Naive thymus-derived CD4-positive, alpha-beta T cell (primary cell): ENCODE measurements at regions of chr14 and their contacts with region 1.

Region 1: DNA sequence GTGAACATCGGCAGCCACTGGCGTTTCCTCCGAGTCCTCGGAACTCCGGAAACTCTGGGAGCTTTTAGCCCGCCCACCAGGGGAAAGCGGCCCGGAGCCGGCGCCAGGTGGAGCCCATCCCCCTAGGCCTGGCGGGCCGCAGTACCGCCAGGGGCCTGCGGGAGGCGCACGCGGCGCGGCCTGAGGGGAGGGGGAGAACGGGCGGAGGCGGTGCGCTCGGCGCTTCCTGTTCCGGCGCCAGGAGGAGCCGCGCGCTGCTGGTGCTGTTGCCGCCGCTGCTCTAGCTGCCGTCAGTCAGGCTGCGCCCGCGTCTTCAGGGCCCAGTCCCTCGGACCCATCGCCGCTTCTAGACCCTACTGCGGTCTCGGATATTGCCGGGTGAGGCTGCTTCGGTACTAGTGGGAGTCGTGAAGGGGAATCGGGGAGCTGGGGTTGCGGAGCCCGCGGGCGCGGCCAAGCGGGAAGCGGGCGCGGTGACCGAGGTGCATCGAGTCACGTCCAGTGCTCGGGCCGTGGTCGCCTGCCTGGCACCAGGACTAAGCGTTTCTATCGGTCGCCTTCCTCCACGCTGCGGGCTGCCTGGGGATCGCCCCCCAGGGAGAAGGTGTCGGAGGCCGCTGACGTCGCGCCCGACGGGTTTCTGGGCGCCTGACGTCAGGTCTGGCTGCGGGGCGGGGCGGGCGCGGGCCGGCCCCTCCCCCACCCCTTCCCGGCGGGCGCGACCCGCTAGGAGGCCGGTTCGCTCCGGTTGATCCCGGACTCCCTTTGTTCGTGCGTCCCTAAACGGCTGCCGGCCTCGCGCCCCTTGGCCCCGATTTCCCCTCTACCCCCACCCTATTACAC is at the start of gene MAPK1IP1L:
- DNase-seq: peak; percentile 86 to 99 (median 92)
- ATAC-seq: peak; percentile 97
- H3K4me3 ChIP-seq: peak within 1 kb of the TSS; percentile 93
- H3K4me3 Mint-ChIP-seq: peak within 1 kb of the TSS; percentile 88 to 94 (median 92)
- H3K27ac ChIP-seq: peak within 1 kb of the TSS; percentile 100
- H3K27ac Mint-ChIP-seq: peak within 1 kb of the TSS; percentile 87 to 97 (median 96)
- H3K4me1 ChIP-seq: peaks cover 26 to 32% of the 10 kb centered on the region in 2 donors
- H3K4me1 Mint-ChIP-seq: peaks cover 17 to 54% (median 39%) of the 10 kb centered on the region in 7 donors
- H3K27me3 ChIP-seq: no peaks in the 10 kb centered on the region
- H3K27me3 Mint-ChIP-seq: no peaks in the 10 kb centered on the region
- total RNA-seq, gene MAPK1IP1L: 65.1 to 143 (median 111) TPM

Region 2: GRCh38 chr14:54396493-54397335 is 654.9 kb before region 1 on chr14 and contains the start of gene CDKN3:
- CTCF ChIA-PET with region 1: no interaction called
- POLR2A ChIA-PET with region 1: no interaction called
- intact Hi-C with region 1: loop called in 1 of 2 experiments (anchors 5 kb)
- DNase-seq: peak; percentile 91 to 96 (median 95)
- ATAC-seq: peak; percentile 98
- H3K4me3 ChIP-seq: peak within 1 kb of the TSS; percentile 85
- H3K4me3 Mint-ChIP-seq: peak within 1 kb of the TSS; percentile 81 to 96 (median 90)
- H3K27ac ChIP-seq: peak within 1 kb of the TSS; percentile 46
- H3K27ac Mint-ChIP-seq: peak within 1 kb of the TSS; percentile 24 to 93 (median 83)
- H3K4me1 ChIP-seq: peaks cover 0 to 9% of the 10 kb centered on the region in 2 donors
- H3K4me1 Mint-ChIP-seq: peaks cover 0 to 38% (median 12%) of the 10 kb centered on the region in 7 donors
- H3K27me3 ChIP-seq: no peaks in the 10 kb centered on the region
- H3K27me3 Mint-ChIP-seq: peaks cover 0 to 2% (median 0%) of the 10 kb centered on the region in 5 donors
- total RNA-seq, gene CDKN3: 0.93 to 48.1 (median 3.0) TPM

Region 3: DNA sequence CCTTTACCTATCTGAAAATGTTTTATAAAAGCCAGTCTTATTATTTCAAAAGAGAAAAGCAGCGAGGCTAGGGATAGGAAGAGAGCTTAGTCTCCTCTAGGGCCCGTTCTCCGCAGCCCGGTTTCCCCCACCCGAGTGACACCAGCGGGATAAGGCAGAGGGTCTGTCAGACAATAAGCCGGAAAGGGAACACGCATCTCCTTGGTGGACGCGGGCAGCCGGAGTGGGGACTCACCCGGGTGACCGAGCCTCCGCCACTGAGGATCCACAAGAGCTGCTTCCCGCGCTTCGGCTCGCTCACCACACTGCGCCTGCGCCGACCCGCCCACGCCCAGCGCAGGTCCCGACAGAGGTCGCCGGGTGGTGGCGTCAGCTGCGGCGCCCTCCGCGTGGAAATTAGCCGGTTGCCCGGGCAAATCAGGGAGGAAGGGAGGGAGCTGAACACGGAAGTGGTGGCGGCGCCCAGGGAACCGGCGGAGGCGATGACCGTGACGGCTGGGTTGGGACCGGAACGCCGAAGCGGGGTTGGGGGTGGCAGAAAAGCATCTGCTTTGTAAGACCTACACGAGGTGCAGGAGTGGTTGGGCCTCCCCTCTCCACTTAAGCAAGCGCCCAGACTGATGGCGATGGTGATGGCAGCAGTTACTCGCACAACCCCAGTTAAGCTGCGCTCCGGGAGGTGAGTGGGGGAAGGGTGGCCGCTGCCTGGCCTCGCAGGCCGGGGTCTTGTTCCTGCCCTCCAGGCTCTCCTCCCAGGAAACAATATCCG is 24.7 kb before region 1 on chr14 and contains the starts of genes SOCS4 and WDHD1:
- CTCF ChIA-PET with region 1: interaction called, 13 read pairs
- POLR2A ChIA-PET with region 1: interaction called, 37 read pairs
- intact Hi-C with region 1: loop called (anchors 1 kb)
- DNase-seq: peak; percentile 93 to 100 (median 96)
- ATAC-seq: peak; percentile 97
- H3K4me3 ChIP-seq: peak within 1 kb of the TSS; percentile 87
- H3K4me3 Mint-ChIP-seq: peak within 1 kb of the TSS; percentile 84 to 96 (median 93)
- H3K27ac ChIP-seq: peak within 1 kb of the TSS; percentile 86
- H3K27ac Mint-ChIP-seq: peak within 1 kb of the TSS; percentile 68 to 96 (median 92)
- H3K4me1 ChIP-seq: peaks cover 12 to 31% of the 10 kb centered on the region in 2 donors
- H3K4me1 Mint-ChIP-seq: peaks cover 26 to 59% (median 53%) of the 10 kb centered on the region in 7 donors
- H3K27me3 ChIP-seq: no peaks in the 10 kb centered on the region
- H3K27me3 Mint-ChIP-seq: no peaks in the 10 kb centered on the region
- total RNA-seq, gene SOCS4: 21.2 to 30.3 (median 22.1) TPM
- total RNA-seq, gene WDHD1: 2.6 to 26.6 (median 3.6) TPM

Region 4: DNA sequence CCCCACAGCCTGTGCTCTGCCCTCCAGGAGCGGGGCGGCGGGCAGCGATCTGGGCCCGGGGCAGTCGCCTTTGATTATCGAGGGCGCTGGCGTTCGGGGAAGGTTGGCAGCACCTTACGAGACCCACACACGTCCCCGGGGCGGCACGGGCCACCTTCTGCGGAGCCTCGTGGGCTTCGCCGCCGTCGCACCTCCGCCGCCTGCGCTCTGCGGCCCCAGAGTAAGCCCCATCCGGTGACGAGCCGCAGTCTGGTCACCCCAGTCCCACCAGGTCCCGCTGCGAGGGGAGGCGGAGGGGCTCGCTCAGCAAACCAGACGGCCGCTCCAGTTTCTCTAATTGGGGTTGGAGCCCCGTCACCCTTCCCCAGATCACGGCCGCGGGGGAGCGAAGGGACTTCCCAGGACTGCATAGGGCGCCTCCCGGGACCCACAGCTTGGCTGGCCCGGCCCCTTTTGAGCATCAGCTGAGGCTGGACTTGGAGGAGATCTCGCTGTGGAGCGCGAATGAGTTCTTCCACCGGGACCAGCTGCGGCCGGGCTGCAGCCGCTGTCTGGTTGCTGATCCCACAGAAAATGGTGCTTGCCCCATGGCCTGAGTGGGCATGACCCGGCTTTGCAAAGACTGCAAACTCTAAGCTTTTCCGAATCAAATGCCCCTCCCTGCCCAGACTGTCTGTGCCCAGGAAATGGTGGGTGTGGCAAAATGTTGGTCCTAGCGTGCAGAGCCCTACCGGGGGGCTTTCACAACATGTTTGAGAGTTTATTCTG is 78.0 kb after region 1 on chr14:
- CTCF ChIA-PET with region 1: no interaction called
- POLR2A ChIA-PET with region 1: interaction called, 3 read pairs
- intact Hi-C with region 1: loop called in 1 of 2 experiments (anchors 2 kb)
- DNase-seq: peak in 8 of 9 donors; percentile 5 to 59 (median 16)
- ATAC-seq: peak; percentile 64
- H3K4me3 ChIP-seq: peak overlapping the region; percentile 19
- H3K4me3 Mint-ChIP-seq: peak overlapping the region; percentile 4 to 85 (median 64)
- H3K27ac ChIP-seq: no peak overlapping the region
- H3K27ac Mint-ChIP-seq: peak overlapping the region in 1 of 9 donors; percentile 60
- H3K4me1 ChIP-seq: peaks cover 0 to 13% of the 10 kb centered on the region in 2 donors
- H3K4me1 Mint-ChIP-seq: peaks cover 0 to 45% (median 8%) of the 10 kb centered on the region in 7 donors
- H3K27me3 ChIP-seq: no peaks in the 10 kb centered on the region
- H3K27me3 Mint-ChIP-seq: peaks cover 17 to 60% (median 41%) of the 10 kb centered on the region in 5 donors

Region 5: DNA sequence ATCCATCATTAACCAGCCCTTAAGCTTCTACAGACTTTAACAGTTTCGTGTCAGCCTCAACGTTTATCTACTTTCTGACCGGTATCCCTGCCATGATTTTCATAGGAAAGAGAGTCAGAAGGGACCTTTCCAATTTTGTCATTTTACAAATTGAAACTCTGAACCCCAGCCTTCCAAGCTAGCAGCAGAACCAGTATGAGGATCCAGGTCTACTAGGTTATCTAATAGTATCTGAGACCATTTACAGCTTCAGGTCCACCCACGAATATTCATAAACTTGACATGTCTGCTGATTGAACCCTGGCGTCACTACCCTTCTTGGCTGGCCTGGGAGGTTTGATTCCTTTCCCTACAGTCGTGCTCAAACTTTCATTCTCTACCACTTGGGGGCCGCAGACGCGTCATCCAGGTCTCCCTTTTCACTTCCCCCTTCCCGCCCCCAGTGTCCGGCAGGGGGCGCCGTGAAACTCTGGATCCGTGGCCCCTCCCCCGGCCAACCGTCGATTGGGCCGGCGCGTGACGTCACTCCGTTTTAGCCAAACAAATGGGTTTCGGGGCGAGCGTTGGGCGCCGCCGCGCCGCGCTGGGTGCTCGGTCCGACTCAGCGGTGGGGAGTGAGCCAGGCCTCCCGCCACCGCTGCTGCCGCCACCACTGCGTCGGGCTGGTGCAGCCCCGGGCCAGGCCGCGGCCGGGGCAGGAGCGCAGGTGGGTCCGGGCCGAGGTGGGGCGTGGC is 219.4 kb after region 1 on chr14 and contains the start of gene FBXO34:
- CTCF ChIA-PET with region 1: interaction called, 4 read pairs
- POLR2A ChIA-PET with region 1: no interaction called
- intact Hi-C with region 1: loop called in 1 of 2 experiments (anchors 1 kb)
- DNase-seq: peak; percentile 96 to 100 (median 99)
- ATAC-seq: peak; percentile 96
- H3K4me3 ChIP-seq: peak within 1 kb of the TSS; percentile 64
- H3K4me3 Mint-ChIP-seq: peak within 1 kb of the TSS; percentile 85 to 94 (median 92)
- H3K27ac ChIP-seq: peak within 1 kb of the TSS; percentile 88
- H3K27ac Mint-ChIP-seq: peak within 1 kb of the TSS; percentile 85 to 96 (median 94)
- H3K4me1 ChIP-seq: peaks cover 4 to 19% of the 10 kb centered on the region in 2 donors
- H3K4me1 Mint-ChIP-seq: peaks cover 19 to 48% (median 40%) of the 10 kb centered on the region in 7 donors
- H3K27me3 ChIP-seq: no peaks in the 10 kb centered on the region
- H3K27me3 Mint-ChIP-seq: peaks cover 0 to 3% (median 0%) of the 10 kb centered on the region in 5 donors
- total RNA-seq, gene FBXO34: 22.0 to 27.3 (median 25.8) TPM

Region 6: GRCh38 chr14:55579724-55580469 is 528.2 kb after region 1 on chr14 and contains the start of gene KTN1:
- CTCF ChIA-PET with region 1: no interaction called
- POLR2A ChIA-PET with region 1: interaction called, 3 read pairs
- intact Hi-C with region 1: loop called in 1 of 2 experiments (anchors 1 kb)
- DNase-seq: peak; percentile 77 to 90 (median 88)
- ATAC-seq: peak; percentile 94
- H3K4me3 ChIP-seq: peak within 1 kb of the TSS; percentile 93
- H3K4me3 Mint-ChIP-seq: peak within 1 kb of the TSS; percentile 93 to 98 (median 95)
- H3K27ac ChIP-seq: peak within 1 kb of the TSS; percentile 86
- H3K27ac Mint-ChIP-seq: peak within 1 kb of the TSS; percentile 90 to 97 (median 93)
- H3K4me1 ChIP-seq: peaks cover 20 to 34% of the 10 kb centered on the region in 2 donors
- H3K4me1 Mint-ChIP-seq: peaks cover 20 to 28% (median 27%) of the 10 kb centered on the region in 7 donors
- H3K27me3 ChIP-seq: no peaks in the 10 kb centered on the region
- H3K27me3 Mint-ChIP-seq: no peaks in the 10 kb centered on the region
- total RNA-seq, gene KTN1: 87.3 to 131 (median 105) TPM